Caco-2 (cell line): ENCODE measurements at regions of chr4 and their contacts with region 1.

Region 1: DNA sequence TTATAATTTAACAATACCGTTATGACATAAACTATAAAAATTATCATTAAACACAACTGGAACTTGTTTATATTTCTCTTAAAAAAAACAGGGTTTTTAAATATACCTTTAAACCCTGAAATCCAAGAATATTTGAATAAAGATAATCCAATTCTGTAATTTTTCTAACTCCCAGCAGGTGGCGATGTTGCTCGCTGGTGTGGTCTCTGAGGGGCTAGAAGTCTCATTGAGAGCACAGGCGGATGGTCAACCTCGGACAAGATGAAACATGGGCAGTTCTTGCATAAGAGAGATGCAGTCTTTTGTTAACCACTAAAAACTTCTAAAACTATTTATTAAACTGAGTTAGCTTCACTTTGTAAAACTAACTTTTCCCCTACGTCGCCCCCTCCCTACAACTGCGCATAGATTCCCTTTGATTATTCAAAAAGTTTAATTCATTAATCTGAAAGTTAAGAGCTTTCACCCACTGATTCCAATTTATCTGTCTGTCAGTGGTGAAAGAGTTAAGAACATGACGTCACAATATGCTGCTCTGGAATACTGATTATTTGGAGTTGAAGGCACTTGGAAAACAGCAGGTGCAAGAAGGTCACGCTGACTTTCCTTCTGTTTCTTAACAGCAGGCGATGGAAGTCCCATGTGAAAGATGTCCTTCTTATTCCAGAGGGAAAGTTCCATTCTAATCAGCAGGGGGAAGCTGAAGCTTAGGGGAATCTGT is 29.5 kb downstream of the DMP1 start:
- DNase-seq: peak; percentile 42 to 51
- H3K4me3 ChIP-seq: no peak overlapping the region
- H3K4me3 Mint-ChIP-seq: no peak overlapping the region
- H3K27ac Mint-ChIP-seq: no peak overlapping the region
- H3K4me1 ChIP-seq: no peaks in the 10 kb centered on the region
- H3K4me1 Mint-ChIP-seq: no peaks in the 10 kb centered on the region
- H3K27me3 ChIP-seq: no peaks in the 10 kb centered on the region
- H3K27me3 Mint-ChIP-seq: peaks cover 3% of the 10 kb centered on the region
- CTCF ChIP-seq: peak; percentile 71 to 74

Region 2: GRCh38 chr4:87838890-87839591 is 159.4 kb after region 1 on chr4:
- CTCF ChIA-PET with region 1: interaction called, 5 read pairs
- POLR2A ChIA-PET with region 1: no interaction called
- intact Hi-C with region 1: loop called (anchors 1 kb)
- DNase-seq: peak in 1 of 2 experiments; percentile 34
- H3K4me3 ChIP-seq: no peak overlapping the region
- H3K4me3 Mint-ChIP-seq: no peak overlapping the region
- H3K27ac Mint-ChIP-seq: no peak overlapping the region
- H3K4me1 ChIP-seq: no peaks in the 10 kb centered on the region
- H3K4me1 Mint-ChIP-seq: no peaks in the 10 kb centered on the region
- H3K27me3 ChIP-seq: no peaks in the 10 kb centered on the region
- H3K27me3 Mint-ChIP-seq: peaks cover 17% of the 10 kb centered on the region
- CTCF ChIP-seq: peak; percentile 38 to 60

Region 3: DNA sequence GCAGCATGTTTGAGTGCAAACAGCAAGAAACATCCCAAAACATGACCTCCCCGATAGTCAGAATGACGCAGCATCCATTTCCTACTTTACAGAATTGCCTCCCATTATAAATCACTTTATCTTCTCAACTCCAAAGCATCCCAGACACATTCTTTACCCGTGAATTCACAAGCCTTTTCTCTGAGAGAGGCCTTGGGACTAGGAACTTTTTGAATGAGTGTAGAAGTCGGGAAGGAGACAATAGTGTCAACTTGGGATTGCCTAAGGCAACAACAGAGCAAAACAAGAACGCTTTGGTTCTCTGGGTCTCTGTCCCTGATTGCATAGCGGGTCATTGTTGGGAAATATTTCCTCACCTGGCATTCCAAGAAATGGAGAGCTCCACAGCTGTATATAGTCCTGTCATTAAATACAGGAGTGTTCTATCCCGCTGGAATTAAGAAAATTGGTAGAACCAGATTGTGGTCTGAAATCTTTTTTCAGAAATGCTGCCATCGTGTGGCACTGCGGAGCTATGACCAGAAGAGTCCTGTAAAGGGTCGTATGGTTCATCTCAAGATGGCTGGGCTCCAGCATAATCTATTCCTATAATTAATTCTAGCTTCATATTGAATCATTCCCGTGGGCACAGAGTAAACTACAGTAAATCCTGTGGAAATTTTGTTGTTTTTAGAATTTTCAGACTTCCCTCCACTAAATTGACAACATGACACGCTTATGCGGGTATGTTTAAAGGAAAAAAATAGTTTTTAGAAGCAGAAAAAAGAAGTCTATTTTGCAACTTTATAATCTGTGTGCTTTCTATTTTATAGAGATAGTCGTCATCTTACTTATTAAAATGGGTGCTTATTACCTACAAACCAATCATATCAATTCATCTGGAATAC is 293.9 kb after region 1 on chr4:
- CTCF ChIA-PET with region 1: no interaction called
- POLR2A ChIA-PET with region 1: no interaction called
- intact Hi-C with region 1: loop called (anchors 5 kb)
- DNase-seq: peak; percentile 57 to 62
- H3K4me3 ChIP-seq: no peak overlapping the region
- H3K4me3 Mint-ChIP-seq: peak overlapping the region; percentile 11
- H3K27ac Mint-ChIP-seq: no peak overlapping the region
- H3K4me1 ChIP-seq: no peaks in the 10 kb centered on the region
- H3K4me1 Mint-ChIP-seq: peaks cover 6% of the 10 kb centered on the region
- H3K27me3 ChIP-seq: no peaks in the 10 kb centered on the region
- H3K27me3 Mint-ChIP-seq: peaks cover 2% of the 10 kb centered on the region
- CTCF ChIP-seq: peak; percentile 71 to 85